ENCODE measurements at regions of chr18 and their contacts with region 1.

Region 1: DNA sequence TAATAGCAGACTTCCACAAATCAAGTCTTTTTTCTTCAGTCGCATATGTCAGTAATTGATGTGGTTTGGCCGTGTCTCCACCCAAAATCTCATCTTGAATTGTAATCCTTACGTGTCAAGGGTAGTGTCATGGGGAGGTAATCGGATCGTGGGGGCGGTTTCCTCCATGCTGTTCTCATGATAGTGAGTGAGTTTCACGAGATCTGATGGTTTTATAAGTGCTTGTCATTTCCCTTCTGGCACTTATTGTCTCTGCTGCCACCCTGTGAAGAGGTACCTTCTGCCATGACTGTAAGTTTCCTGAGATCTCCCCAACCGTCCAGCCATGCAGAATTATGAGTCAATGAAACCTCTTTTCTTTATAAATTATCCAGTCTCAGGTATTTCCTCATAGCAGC is 478.8 kb downstream of the PTPRM start:
- DNase-seq: no peak
- ATAC-seq: no peak

Region 2: GRCh38 chr18:7958081-7958896 is 87.6 kb before region 1 on chr18:
- intact Hi-C with region 1: loop called (anchors 10 kb)
- DNase-seq: no peak
- ATAC-seq: no peak

Region 3: GRCh38 chr18:7987284-7987976 is 58.5 kb before region 1 on chr18:
- intact Hi-C with region 1: no loop called
- DNase-seq: no peak
- ATAC-seq: no peak

Region 4: DNA sequence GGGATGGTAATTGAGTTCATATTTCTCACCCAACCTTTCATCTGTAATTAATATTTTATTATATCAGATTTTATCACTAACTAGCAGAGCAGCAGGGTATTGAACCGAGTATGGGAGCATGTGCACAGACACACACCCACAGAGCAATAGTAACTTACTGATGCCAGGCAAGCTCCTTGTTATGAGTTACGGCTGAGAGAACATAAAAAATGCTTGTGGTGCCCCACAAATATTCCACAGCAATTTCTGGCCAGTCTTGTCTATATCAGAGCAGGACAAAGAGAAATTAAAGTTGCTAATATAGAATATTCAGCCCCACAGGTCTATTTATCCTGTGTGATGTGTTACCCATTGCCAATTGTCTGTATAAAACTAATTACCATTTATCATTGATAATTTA is 61.5 kb after region 1 on chr18:
- intact Hi-C with region 1: no loop called
- DNase-seq: no peak
- ATAC-seq: no peak